Activated naive CD4-positive, alpha-beta T cell treated with anti-CD3 and anti-CD28 coated beads for 36 hours (primary cell): ENCODE measurements at regions of chr11 and their contacts with region 1.

Region 1: DNA sequence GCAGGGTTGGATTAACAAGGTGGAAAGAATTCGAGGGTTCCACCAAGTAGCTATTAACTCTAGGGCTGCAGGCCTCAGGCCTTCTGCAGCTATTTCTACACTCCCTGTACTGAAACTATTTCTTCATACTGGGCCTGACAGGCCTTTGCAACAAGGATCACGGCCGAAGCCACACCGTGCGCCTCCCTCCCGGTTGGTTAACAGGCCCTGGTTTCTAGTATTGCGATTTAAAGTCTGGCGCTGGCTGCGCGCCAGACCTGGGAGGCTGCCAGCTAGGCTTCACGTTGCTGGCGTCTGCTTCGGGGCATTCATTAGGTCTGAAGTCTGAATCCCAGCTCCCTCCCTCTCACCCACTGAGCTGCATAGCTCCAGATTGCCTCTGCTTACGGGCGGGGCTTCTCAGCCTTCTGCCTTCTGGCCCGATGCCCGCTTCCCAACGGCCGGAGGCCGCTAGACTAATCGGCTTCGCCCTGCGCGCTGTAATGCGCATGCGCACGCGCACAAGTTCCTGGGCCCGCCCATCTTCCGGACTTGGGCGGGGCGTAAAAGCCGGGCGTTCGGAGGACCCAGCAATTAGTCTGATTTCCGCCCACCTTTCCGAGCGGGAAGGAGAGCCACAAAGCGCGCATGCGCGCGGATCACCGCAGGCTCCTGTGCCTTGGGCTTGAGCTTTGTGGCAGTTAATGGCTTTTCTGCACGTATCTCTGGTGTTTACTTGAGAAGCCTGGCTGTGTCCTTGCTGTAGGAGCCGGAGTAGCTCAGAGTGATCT is 1.6 kb downstream of the LDHA start:
- DNase-seq: peak; percentile 96
- H3K4me3 Mint-ChIP-seq: peak overlapping the region; percentile 97
- H3K27ac Mint-ChIP-seq: peak overlapping the region; percentile 99
- H3K4me1 Mint-ChIP-seq: peaks cover 62% of the 10 kb centered on the region
- H3K27me3 Mint-ChIP-seq: no peaks in the 10 kb centered on the region

Region 2: GRCh38 chr11:17077520-17078401 is 1318.2 kb before region 1 on chr11 and contains the start of gene RPS13:
- CTCF ChIA-PET with region 1: no interaction called
- intact Hi-C with region 1: loop called (anchors 5 kb)
- DNase-seq: peak; percentile 97
- H3K4me3 Mint-ChIP-seq: peak within 1 kb of the TSS; percentile 93
- H3K27ac Mint-ChIP-seq: peak within 1 kb of the TSS; percentile 97
- H3K4me1 Mint-ChIP-seq: peaks cover 27% of the 10 kb centered on the region
- H3K27me3 Mint-ChIP-seq: no peaks in the 10 kb centered on the region
- total RNA-seq, gene RPS13: 2,045 to 2,099 TPM

Region 3: DNA sequence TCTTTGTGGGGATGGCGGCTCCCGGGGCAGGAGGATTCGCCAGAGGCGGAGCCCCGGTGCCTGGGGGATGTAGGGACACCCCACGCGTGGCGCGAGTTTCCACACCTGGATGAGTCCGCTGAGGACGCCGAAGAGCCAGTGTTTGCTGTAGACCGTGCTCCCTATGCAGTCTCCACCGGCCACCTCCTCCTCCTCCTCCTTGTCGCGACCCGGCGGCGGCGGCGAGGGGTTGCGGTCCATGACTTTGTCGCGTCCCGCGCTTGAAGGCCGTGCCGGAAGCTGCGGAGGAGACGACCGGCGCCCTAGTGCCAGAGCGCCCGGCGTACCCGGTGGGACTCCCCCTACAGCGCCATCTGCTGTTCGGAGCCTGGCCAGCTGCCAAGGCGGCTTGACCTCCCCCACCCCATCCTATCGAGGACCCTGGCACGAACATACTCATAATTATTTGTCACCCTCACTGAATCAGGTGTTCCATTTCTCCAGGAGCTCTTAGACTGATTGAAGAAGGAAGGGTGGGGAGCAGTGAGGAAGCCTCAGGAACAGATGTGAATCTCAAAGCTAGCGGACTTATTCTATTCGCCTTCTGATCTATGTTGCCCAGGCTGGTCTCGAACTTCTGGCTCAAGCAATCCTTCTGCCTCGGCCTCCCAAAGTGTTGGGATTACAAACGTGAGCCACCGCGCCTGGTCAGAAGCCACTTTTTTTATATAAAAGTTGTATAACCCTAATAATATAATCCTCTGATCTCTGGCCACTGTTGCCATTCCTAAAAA is 289.9 kb before region 1 on chr11 and contains the start of gene SAAL1:
- CTCF ChIA-PET with region 1: no interaction called
- intact Hi-C with region 1: loop called (anchors 1 kb)
- DNase-seq: peak; percentile 93
- H3K4me3 Mint-ChIP-seq: peak within 1 kb of the TSS; percentile 90
- H3K27ac Mint-ChIP-seq: peak within 1 kb of the TSS; percentile 83
- H3K4me1 Mint-ChIP-seq: peaks cover 34% of the 10 kb centered on the region
- H3K27me3 Mint-ChIP-seq: no peaks in the 10 kb centered on the region
- total RNA-seq, gene SAAL1: 36.4 to 37.0 TPM

Region 4: GRCh38 chr11:18383388-18384156 is 12.3 kb before region 1 on chr11:
- CTCF ChIA-PET with region 1: interaction called, 13 read pairs
- intact Hi-C with region 1: loop called (anchors 1 kb)
- DNase-seq: peak; percentile 92
- H3K4me3 Mint-ChIP-seq: peak overlapping the region; percentile 42
- H3K27ac Mint-ChIP-seq: peak overlapping the region; percentile 89
- H3K4me1 Mint-ChIP-seq: peaks cover 34% of the 10 kb centered on the region
- H3K27me3 Mint-ChIP-seq: no peaks in the 10 kb centered on the region

Region 5: DNA sequence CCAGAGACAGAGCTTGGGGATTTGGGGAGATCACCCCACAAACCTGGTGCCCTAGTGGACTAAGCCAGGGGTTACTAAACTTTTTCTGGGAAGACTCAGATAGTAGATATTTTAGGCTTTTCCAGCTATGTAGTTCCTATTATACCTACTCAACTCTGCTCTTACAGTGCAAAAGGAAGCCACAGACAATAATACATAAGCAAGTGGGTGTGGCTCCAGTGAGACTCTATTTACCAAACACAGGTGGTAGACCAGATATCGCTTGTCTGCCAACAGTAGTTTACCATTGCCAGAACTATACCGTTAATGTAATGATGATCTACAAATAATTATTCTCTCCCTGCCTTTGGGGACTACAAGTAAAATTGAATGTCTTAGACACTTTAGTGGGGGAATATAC is 23.1 kb after region 1 on chr11:
- CTCF ChIA-PET with region 1: no interaction called
- intact Hi-C with region 1: no loop called
- DNase-seq: no peak
- H3K4me3 Mint-ChIP-seq: no peak overlapping the region
- H3K27ac Mint-ChIP-seq: no peak overlapping the region
- H3K4me1 Mint-ChIP-seq: peaks cover 10% of the 10 kb centered on the region
- H3K27me3 Mint-ChIP-seq: no peaks in the 10 kb centered on the region

Region 6: GRCh38 chr11:18526521-18527296 is 130.8 kb after region 1 on chr11 and contains the start of gene TSG101:
- CTCF ChIA-PET with region 1: no interaction called
- intact Hi-C with region 1: loop called (anchors 1 kb)
- DNase-seq: peak; percentile 94
- H3K4me3 Mint-ChIP-seq: peak within 1 kb of the TSS; percentile 100
- H3K27ac Mint-ChIP-seq: peak within 1 kb of the TSS; percentile 100
- H3K4me1 Mint-ChIP-seq: peaks cover 45% of the 10 kb centered on the region
- H3K27me3 Mint-ChIP-seq: no peaks in the 10 kb centered on the region
- total RNA-seq, gene TSG101: 33.2 to 40.5 TPM

Region 7: DNA sequence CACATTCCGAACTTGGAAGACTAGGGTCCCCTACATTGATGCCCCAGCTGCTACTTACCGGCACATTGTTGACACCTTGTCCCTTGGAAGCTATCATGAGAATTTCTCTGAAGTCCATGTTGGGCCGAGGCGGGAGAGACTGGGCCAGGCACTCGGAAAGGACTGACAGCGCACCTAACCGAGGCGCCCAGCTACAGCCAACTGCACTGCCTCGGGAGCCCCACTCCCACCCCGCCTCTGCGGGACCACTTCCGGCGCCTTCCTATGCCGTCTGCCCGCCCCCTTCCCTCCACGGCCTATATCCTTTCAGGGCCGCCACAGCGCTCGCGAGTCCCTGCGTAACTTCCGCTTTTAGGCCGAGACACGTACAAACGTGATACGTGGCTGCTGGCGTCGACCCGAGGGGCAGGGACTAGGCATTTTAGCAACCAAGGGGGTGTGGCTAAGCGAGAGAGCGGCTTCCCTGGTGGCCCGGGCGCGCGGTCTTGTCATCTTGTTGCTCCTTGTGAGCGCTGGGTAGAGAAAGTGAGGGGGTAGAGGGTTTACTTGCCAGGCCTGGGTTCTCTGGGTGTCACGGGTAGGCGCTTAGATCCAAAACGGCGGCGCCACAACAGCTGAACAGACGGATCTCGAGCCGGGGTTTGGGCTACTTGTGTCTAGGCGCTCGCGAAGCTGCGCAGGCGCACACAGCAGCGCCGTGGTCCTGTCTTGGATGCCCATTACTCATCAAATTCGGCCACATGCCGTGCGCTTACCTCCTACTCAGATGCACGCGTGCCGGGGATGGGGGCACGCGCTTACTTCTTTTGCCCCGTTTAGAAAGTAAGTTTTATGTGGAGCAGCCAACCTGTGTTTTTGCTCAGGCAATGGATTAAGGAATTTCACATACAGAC is 238.5 kb after region 1 on chr11 and contains the start of gene SPTY2D1:
- CTCF ChIA-PET with region 1: no interaction called
- intact Hi-C with region 1: loop called (anchors 1 kb)
- DNase-seq: peak; percentile 99
- H3K4me3 Mint-ChIP-seq: peak within 1 kb of the TSS; percentile 87
- H3K27ac Mint-ChIP-seq: peak within 1 kb of the TSS; percentile 96
- H3K4me1 Mint-ChIP-seq: peaks cover 30% of the 10 kb centered on the region
- H3K27me3 Mint-ChIP-seq: no peaks in the 10 kb centered on the region
- total RNA-seq, gene SPTY2D1: 13.9 to 15.0 TPM

Region 8: GRCh38 chr11:20363500-20364411 is 1967.8 kb after region 1 on chr11 and contains the start of gene HTATIP2:
- CTCF ChIA-PET with region 1: no interaction called
- intact Hi-C with region 1: loop called (anchors 10 kb)
- DNase-seq: peak; percentile 75
- H3K4me3 Mint-ChIP-seq: peak within 1 kb of the TSS; percentile 82
- H3K27ac Mint-ChIP-seq: peak within 1 kb of the TSS; percentile 91
- H3K4me1 Mint-ChIP-seq: peaks cover 68% of the 10 kb centered on the region
- H3K27me3 Mint-ChIP-seq: no peaks in the 10 kb centered on the region
- total RNA-seq, gene HTATIP2: 78.3 to 80.7 TPM